Activated naive CD8-positive, alpha-beta T cell treated with anti-CD3 and anti-CD28 coated beads, Interleukin-2, amount 10 ng/mL, durations not matched to agents 7 days and 5 days (primary cell): ENCODE measurements at regions of chr16 and their contacts with region 1.

Region 1: GRCh38 chr16:53346-54236 is at the starts of genes POLR3K and SNRNP25:
- DNase-seq: peak; percentile 96
- ATAC-seq: peak; percentile 99
- H3K4me3 Mint-ChIP-seq: peak within 1 kb of the TSS; percentile 99
- H3K27ac Mint-ChIP-seq: peak within 1 kb of the TSS; percentile 90
- H3K4me1 Mint-ChIP-seq: peaks cover 26% of the 10 kb centered on the region
- H3K27me3 Mint-ChIP-seq: no peaks in the 10 kb centered on the region
- total RNA-seq, gene POLR3K: 29.2 to 30.1 TPM
- total RNA-seq, gene SNRNP25: 52.8 to 59.1 TPM

Region 2: GRCh38 chr16:38939-39892 is 14.4 kb before region 1 on chr16:
- POLR2A ChIA-PET with region 1: interaction called, 27 read pairs
- DNase-seq: peak; percentile 63
- ATAC-seq: peak; percentile 97
- H3K4me3 Mint-ChIP-seq: peak overlapping the region; percentile 42
- H3K27ac Mint-ChIP-seq: peak overlapping the region; percentile 77
- H3K4me1 Mint-ChIP-seq: peaks cover 43% of the 10 kb centered on the region
- H3K27me3 Mint-ChIP-seq: no peaks in the 10 kb centered on the region

Region 3: DNA sequence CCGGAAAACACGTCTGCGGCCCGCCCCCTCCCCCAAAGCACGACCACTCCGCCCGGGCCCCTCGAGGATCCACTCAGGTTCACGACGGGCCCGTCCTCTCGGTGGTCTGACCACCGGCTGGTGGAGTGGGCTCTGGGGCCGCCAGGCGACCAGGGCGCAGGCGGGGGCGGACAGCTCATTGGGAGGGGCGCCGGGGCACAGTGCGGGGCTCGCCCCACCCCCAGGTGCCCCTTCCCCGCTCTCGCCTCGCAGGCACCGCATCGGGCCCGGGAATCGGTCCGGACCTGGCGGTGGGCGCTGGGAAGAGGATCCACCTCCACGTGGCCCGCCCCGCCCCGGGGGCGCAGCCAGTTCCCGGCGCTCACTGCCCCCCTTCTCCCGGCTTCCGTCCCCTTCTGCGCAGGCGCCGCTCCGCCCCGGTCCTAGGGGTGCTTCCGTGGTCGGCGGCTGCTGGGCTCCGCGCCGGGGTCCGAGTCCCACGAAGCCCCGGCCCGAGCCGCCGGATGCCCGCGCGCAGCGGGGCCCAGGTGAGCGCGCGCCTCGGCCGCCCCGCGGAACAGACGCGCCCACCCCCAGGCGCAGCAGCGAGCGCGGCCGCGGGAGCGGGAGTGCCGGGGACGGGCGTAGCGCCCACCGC is 24.3 kb after region 1 on chr16 and contains the start of gene MPG:
- POLR2A ChIA-PET with region 1: interaction called, 10 read pairs
- DNase-seq: peak; percentile 91
- ATAC-seq: peak; percentile 75
- H3K4me3 Mint-ChIP-seq: peak within 1 kb of the TSS; percentile 89
- H3K27ac Mint-ChIP-seq: peak within 1 kb of the TSS; percentile 84
- H3K4me1 Mint-ChIP-seq: peaks cover 18% of the 10 kb centered on the region
- H3K27me3 Mint-ChIP-seq: peaks cover 24% of the 10 kb centered on the region
- total RNA-seq, gene MPG: 45.8 to 48.1 TPM

Region 4: GRCh38 chr16:252366-253337 is 199.1 kb after region 1 on chr16:
- POLR2A ChIA-PET with region 1: no interaction called
- DNase-seq: no peak
- ATAC-seq: peak; percentile 73
- H3K4me3 Mint-ChIP-seq: peak overlapping the region; percentile 87
- H3K27ac Mint-ChIP-seq: peak overlapping the region; percentile 89
- H3K4me1 Mint-ChIP-seq: peaks cover 26% of the 10 kb centered on the region
- H3K27me3 Mint-ChIP-seq: no peaks in the 10 kb centered on the region